CD8-positive, alpha-beta T cell (primary cell): ENCODE measurements at regions of chr16 and their contacts with region 1.

Region 1: DNA sequence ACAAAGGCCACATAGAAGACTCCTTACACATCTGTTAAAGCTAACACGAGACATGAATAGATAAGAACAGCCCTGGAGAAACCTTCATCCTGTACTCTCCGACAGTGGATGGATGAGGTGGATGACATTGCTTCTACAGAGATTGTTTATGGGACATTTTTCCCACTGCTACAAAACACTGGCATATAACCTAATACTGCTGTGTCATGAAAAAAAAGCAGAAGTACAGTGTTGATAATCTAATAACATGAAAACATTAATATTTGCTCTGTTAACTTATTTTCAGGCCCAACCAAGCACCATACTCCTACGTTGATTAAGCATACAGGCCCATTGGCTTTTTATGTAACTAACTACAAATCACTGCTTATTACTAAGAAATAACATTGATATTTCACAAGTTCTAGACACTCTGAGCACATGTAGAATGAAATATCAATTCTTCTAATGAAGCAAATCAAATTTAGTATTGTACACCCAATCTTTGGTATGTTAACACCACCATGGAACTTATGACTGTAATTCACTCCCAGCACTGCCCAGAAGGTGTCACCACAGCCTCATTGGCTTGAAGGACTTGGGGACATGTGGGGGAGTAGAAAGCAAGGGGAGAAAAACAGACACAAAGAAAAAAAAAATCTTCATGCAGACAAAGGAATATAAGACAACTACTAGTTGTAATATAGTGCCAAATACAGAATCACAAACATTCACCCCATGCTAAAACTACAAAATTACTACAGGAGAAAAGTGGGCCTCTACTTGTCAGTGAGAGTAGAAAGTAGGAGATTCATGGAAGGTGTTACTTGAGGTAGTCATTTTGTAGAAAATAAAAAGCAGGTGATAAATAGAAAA is 330.0 kb upstream of the PMFBP1 start:
- DNase-seq: peak in 6 of 9 experiments; percentile 3 to 51 (median 24)
- ATAC-seq: no peak
- H3K4me3 ChIP-seq: no peak overlapping the region
- H3K4me3 Mint-ChIP-seq: no peak overlapping the region
- H3K27ac ChIP-seq: no peak overlapping the region
- H3K27ac Mint-ChIP-seq: no peak overlapping the region
- H3K4me1 ChIP-seq: no peaks in the 10 kb centered on the region
- H3K4me1 Mint-ChIP-seq: peaks cover 7% of the 10 kb centered on the region
- H3K27me3 ChIP-seq: no peaks in the 10 kb centered on the region
- H3K27me3 Mint-ChIP-seq: no peaks in the 10 kb centered on the region
- CTCF ChIP-seq: peak; percentile 43

Region 2: GRCh38 chr16:72487283-72487682 is 14.7 kb before region 1 on chr16:
- CTCF ChIA-PET with region 1: no interaction called
- POLR2A ChIA-PET with region 1: no interaction called
- intact Hi-C with region 1: no loop called
- DNase-seq: no peak
- ATAC-seq: no peak
- H3K4me3 ChIP-seq: no peak overlapping the region
- H3K4me3 Mint-ChIP-seq: no peak overlapping the region
- H3K27ac ChIP-seq: no peak overlapping the region
- H3K27ac Mint-ChIP-seq: no peak overlapping the region
- H3K4me1 ChIP-seq: no peaks in the 10 kb centered on the region
- H3K4me1 Mint-ChIP-seq: peaks cover 14% of the 10 kb centered on the region
- H3K27me3 ChIP-seq: no peaks in the 10 kb centered on the region
- H3K27me3 Mint-ChIP-seq: no peaks in the 10 kb centered on the region
- CTCF ChIP-seq: no peak

Region 3: GRCh38 chr16:72751076-72751475 is 249.1 kb after region 1 on chr16:
- CTCF ChIA-PET with region 1: no interaction called
- POLR2A ChIA-PET with region 1: no interaction called
- intact Hi-C with region 1: no loop called
- DNase-seq: no peak
- ATAC-seq: no peak
- H3K4me3 ChIP-seq: no peak overlapping the region
- H3K4me3 Mint-ChIP-seq: no peak overlapping the region
- H3K27ac ChIP-seq: no peak overlapping the region
- H3K27ac Mint-ChIP-seq: no peak overlapping the region
- H3K4me1 ChIP-seq: no peaks in the 10 kb centered on the region
- H3K4me1 Mint-ChIP-seq: no peaks in the 10 kb centered on the region
- H3K27me3 ChIP-seq: no peaks in the 10 kb centered on the region
- H3K27me3 Mint-ChIP-seq: no peaks in the 10 kb centered on the region
- CTCF ChIP-seq: no peak

Region 4: GRCh38 chr16:72847187-72848027 is 345.4 kb after region 1 on chr16:
- CTCF ChIA-PET with region 1: no interaction called
- POLR2A ChIA-PET with region 1: no interaction called
- intact Hi-C with region 1: loop called in 1 of 2 experiments (anchors 5 kb)
- DNase-seq: no peak
- ATAC-seq: no peak
- H3K4me3 ChIP-seq: no peak overlapping the region
- H3K4me3 Mint-ChIP-seq: no peak overlapping the region
- H3K27ac ChIP-seq: no peak overlapping the region
- H3K27ac Mint-ChIP-seq: no peak overlapping the region
- H3K4me1 ChIP-seq: no peaks in the 10 kb centered on the region
- H3K4me1 Mint-ChIP-seq: peaks cover 9% of the 10 kb centered on the region
- H3K27me3 ChIP-seq: no peaks in the 10 kb centered on the region
- H3K27me3 Mint-ChIP-seq: peaks cover 6% of the 10 kb centered on the region
- CTCF ChIP-seq: no peak

Region 5: DNA sequence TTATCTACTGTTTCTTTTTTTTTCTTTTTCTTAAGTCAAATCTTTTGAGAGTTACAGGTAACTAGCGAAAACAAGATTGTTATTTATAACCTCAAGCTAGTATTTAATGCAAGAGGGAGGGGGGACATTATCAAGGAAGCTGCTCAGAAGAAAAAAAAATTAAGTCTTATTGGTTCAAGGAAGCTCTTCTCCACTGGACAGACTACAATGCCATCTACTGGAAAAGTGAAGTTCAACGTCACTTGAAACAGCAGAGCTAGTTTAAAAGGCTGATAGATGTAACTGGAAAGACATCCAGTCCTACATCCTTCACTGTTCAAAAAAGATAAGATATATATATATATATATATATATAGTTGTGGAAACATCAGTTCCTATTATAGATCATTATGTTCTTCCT is 1376.6 kb after region 1 on chr16:
- CTCF ChIA-PET with region 1: no interaction called
- POLR2A ChIA-PET with region 1: no interaction called
- intact Hi-C with region 1: loop called in 1 of 2 experiments (anchors 5 kb)
- DNase-seq: peak in 1 of 9 experiments; percentile 19
- ATAC-seq: no peak
- H3K4me3 ChIP-seq: no peak overlapping the region
- H3K4me3 Mint-ChIP-seq: no peak overlapping the region
- H3K27ac ChIP-seq: no peak overlapping the region
- H3K27ac Mint-ChIP-seq: no peak overlapping the region
- H3K4me1 ChIP-seq: no peaks in the 10 kb centered on the region
- H3K4me1 Mint-ChIP-seq: no peaks in the 10 kb centered on the region
- H3K27me3 ChIP-seq: no peaks in the 10 kb centered on the region
- H3K27me3 Mint-ChIP-seq: no peaks in the 10 kb centered on the region
- CTCF ChIP-seq: no peak

Region 6: GRCh38 chr16:73956587-73957494 is 1454.9 kb after region 1 on chr16:
- CTCF ChIA-PET with region 1: interaction called, 5 read pairs
- POLR2A ChIA-PET with region 1: no interaction called
- intact Hi-C with region 1: loop called in 1 of 2 experiments (anchors 5 kb)
- DNase-seq: peak in 4 of 9 experiments; percentile 15 to 47 (median 20)
- ATAC-seq: no peak
- H3K4me3 ChIP-seq: no peak overlapping the region
- H3K4me3 Mint-ChIP-seq: no peak overlapping the region
- H3K27ac ChIP-seq: no peak overlapping the region
- H3K27ac Mint-ChIP-seq: no peak overlapping the region
- H3K4me1 ChIP-seq: no peaks in the 10 kb centered on the region
- H3K4me1 Mint-ChIP-seq: no peaks in the 10 kb centered on the region
- H3K27me3 ChIP-seq: no peaks in the 10 kb centered on the region
- H3K27me3 Mint-ChIP-seq: peaks cover 2% of the 10 kb centered on the region
- CTCF ChIP-seq: peak; percentile 61